Activated T-helper 2 cell treated with anti-CD3 and anti-CD28 coated beads, Interferon-gamma antibody, Interleukin-2, Interleukin-4, amounts not matched to agents 10 μg/mL and 5 μg/mL and 100 μg/mL, durations not matched to agents 14 hours and 24 hours and 36 hours (primary cell): ENCODE measurements at regions of chr10 and their contacts with region 1.

Region 1: DNA sequence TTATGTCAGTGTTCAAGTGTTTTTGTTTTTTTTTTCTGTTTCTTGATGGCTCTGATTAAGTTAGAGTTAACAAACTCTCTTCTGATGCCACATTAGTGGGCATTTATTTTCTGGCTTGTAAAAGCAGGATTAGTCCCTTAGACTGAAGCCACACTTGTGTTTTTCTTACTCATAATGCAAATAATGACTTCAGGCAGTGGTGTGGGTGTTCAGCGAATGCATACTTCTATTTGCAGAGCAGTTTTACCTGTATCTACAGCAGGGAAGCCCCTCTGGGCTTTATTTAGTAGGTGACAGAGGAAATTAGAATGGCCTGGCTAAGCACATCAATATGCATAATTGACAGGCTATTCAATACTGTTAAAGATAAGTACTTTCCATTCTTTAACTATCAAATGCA is 79.9 kb downstream of the CNNM2 start:
- DNase-seq: no peak
- H3K4me3 Mint-ChIP-seq: no peak overlapping the region
- H3K27ac Mint-ChIP-seq: no peak overlapping the region
- H3K4me1 Mint-ChIP-seq: peaks cover 12% of the 10 kb centered on the region
- H3K27me3 Mint-ChIP-seq: no peaks in the 10 kb centered on the region

Region 2: GRCh38 chr10:102935505-102935904 is 62.5 kb before region 1 on chr10:
- intact Hi-C with region 1: loop called (anchors 5 kb)
- DNase-seq: no peak
- H3K4me3 Mint-ChIP-seq: no peak overlapping the region
- H3K27ac Mint-ChIP-seq: peak overlapping the region; percentile 87
- H3K4me1 Mint-ChIP-seq: peaks cover 16% of the 10 kb centered on the region
- H3K27me3 Mint-ChIP-seq: no peaks in the 10 kb centered on the region

Region 3: GRCh38 chr10:103053659-103054581 is 55.9 kb after region 1 on chr10:
- intact Hi-C with region 1: loop called (anchors 10 kb)
- DNase-seq: peak; percentile 75
- H3K4me3 Mint-ChIP-seq: peak overlapping the region; percentile 80
- H3K27ac Mint-ChIP-seq: peak overlapping the region; percentile 89
- H3K4me1 Mint-ChIP-seq: peaks cover 25% of the 10 kb centered on the region
- H3K27me3 Mint-ChIP-seq: no peaks in the 10 kb centered on the region